Right cardiac atrium (tissue), 5 donors: ENCODE measurements at regions of chr1 and their contacts with region 1.

Region 1: GRCh38 chr1:5745776-5746610 is 246.2 kb downstream of the NPHP4 start:
- DNase-seq: peak; percentile 65 to 85 (median 84)
- ATAC-seq: peak; percentile 80 to 82
- H3K4me3 ChIP-seq: no peak overlapping the region
- H3K27ac ChIP-seq: no peak overlapping the region
- H3K4me1 ChIP-seq: no peaks in the 10 kb centered on the region
- H3K27me3 ChIP-seq: no peaks in the 10 kb centered on the region

Region 2: DNA sequence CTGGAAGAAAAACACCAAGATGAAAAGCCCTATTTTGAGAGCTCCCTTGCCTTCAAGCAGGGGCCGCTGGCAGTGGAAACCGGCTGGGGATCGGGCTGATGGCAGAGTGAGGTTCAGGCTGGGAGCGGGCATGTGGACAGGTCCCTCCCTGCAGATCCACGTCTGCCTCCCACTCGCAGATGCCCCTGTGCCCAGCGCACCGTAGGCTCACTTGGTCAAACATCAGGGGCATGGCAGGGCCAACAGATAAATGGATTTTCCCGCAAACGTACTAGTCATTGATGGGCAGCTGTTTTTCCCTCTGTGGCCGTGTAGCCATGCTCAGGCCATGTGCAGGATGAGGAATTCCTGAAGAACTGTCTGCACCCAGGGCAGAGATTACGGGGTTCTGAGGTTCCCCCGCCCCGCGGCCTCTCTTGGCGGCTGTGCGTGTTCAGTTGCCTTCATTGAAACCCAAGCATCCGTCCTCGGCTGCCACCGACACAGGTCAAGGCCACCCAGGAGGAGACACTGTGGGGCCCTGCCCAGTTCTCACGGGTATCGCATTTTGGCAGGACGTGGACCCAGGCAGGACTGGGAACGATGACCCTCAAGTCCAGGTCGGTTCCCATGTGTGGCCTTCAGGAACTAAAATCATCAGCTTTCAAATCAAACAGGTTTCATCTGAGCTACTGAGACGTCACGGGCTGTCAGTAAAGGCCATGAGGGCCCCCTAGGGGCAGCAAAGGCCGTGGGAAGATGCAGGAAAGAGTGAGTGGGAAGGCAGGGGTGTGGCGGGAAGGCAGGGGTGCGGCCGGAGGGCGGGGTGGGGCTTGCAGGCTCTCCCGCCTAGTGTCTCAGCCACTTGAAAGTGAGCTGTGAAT is 1839.1 kb before region 1 on chr1:
- intact Hi-C with region 1: loop called in 1 of 4 experiments (anchors 5 kb)
- DNase-seq: no peak
- ATAC-seq: no peak
- H3K4me3 ChIP-seq: no peak overlapping the region
- H3K27ac ChIP-seq: no peak overlapping the region
- H3K4me1 ChIP-seq: peaks cover 4% of the 10 kb centered on the region
- H3K27me3 ChIP-seq: no peaks in the 10 kb centered on the region

Region 3: GRCh38 chr1:5514519-5515183 is 231.3 kb before region 1 on chr1:
- intact Hi-C with region 1: loop called (anchors 5 to 10 kb)
- DNase-seq: peak; percentile 63 to 90 (median 87)
- ATAC-seq: peak; percentile 56 to 74
- H3K4me3 ChIP-seq: no peak overlapping the region
- H3K27ac ChIP-seq: no peak overlapping the region
- H3K4me1 ChIP-seq: no peaks in the 10 kb centered on the region
- H3K27me3 ChIP-seq: no peaks in the 10 kb centered on the region

Region 4: GRCh38 chr1:5637171-5637570 is 108.8 kb before region 1 on chr1:
- intact Hi-C with region 1: loop called (anchors 5 to 10 kb)
- DNase-seq: no peak
- ATAC-seq: no peak
- H3K4me3 ChIP-seq: no peak overlapping the region
- H3K27ac ChIP-seq: no peak overlapping the region
- H3K4me1 ChIP-seq: no peaks in the 10 kb centered on the region
- H3K27me3 ChIP-seq: no peaks in the 10 kb centered on the region

Region 5: GRCh38 chr1:5915587-5916571 is 169.9 kb after region 1 on chr1:
- intact Hi-C with region 1: loop called in 1 of 4 experiments (anchors 10 kb)
- DNase-seq: no peak
- ATAC-seq: peak; percentile 39 to 44
- H3K4me3 ChIP-seq: no peak overlapping the region
- H3K27ac ChIP-seq: no peak overlapping the region
- H3K4me1 ChIP-seq: no peaks in the 10 kb centered on the region
- H3K27me3 ChIP-seq: no peaks in the 10 kb centered on the region